ENCODE measurements at regions of chr16 and their contacts with region 1.

Region 1: DNA sequence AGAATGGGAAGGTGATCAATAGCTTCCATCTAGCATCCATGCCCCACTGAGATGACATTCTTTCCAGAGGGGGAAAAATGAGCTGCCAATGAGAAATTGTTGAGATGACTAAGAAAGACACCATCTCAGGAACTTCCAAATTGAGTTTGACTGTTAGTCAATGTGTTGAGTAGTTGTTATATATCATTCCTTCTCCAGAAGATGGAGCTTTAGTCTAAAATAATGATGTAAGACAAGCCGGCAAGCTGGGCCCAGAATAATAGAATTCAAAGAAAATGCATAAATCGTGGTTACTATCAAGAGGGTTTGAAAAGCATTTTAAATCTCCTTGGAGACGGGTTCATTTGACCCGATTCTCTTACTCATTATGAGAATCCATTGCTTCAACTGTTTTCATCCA is 71.0 kb upstream of the ATF7IP2 start:
- DNase-seq: no peak
- ATAC-seq: no peak
- H3K4me3 ChIP-seq: no peak overlapping the region
- H3K27ac ChIP-seq: no peak overlapping the region
- H3K4me1 ChIP-seq: no peaks in the 10 kb centered on the region
- H3K27me3 ChIP-seq: no peaks in the 10 kb centered on the region

Region 2: DNA sequence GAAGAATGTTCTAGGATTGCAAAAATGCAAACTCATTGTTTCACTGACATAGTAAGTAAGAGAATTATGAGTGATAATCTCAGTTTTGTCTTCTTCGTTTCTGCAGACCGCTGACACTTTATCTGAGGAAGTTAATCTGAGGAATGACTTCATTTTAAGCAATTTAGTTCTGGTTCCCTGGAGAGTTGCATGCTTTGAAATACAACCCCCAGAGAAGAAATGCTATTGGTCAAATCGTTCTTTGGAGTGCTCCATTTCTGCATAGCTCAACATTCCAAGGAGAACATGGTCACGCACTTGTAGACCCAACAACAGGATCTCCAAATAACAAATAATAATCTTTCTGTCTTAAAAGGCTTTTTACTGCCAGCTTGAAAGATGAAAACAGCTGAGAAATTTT is 559.7 kb before region 1 on chr16:
- intact Hi-C with region 1: no loop called
- DNase-seq: no peak
- ATAC-seq: peak; percentile 40 to 45
- H3K4me3 ChIP-seq: no peak overlapping the region
- H3K27ac ChIP-seq: no peak overlapping the region
- H3K4me1 ChIP-seq: no peaks in the 10 kb centered on the region
- H3K27me3 ChIP-seq: no peaks in the 10 kb centered on the region

Region 3: DNA sequence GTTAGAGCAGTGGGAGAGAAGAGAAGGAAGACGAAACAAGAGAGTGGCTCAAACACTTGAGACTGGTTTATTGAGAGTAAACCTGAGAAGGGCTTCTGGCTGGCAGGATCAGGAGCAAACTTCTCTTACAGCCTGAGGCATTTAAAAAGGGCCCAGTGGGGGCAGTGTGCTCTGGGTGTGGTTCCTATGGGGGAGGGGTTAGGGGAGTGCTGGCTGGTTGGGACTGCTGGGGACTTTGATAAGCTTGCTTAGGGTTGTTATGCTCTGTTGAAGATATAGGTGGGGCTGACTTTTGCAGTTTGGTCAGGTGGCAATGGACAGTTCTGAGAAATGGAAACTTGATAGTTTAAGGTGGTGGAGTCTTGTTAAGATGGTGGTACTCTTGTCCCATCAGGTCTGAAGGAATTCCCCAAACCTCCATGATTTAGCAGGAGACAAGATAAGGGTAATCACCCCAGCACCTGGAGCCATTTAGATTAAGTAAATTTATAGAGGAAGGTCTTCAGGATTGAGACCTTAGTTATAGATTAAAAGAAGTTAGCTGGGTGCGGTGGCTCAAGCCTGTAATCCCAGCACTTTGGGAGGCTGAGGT is 186.3 kb after region 1 on chr16:
- intact Hi-C with region 1: loop called (anchors 5 kb)
- DNase-seq: no peak
- ATAC-seq: no peak
- H3K4me3 ChIP-seq: no peak overlapping the region
- H3K27ac ChIP-seq: no peak overlapping the region
- H3K4me1 ChIP-seq: no peaks in the 10 kb centered on the region
- H3K27me3 ChIP-seq: no peaks in the 10 kb centered on the region

Region 4: GRCh38 chr16:10509534-10510025 is 194.8 kb after region 1 on chr16:
- intact Hi-C with region 1: loop called (anchors 5 kb)
- DNase-seq: peak in 2 of 3 donors; percentile 28 to 58
- ATAC-seq: peak; percentile 89 to 90
- H3K4me3 ChIP-seq: no peak overlapping the region
- H3K27ac ChIP-seq: no peak overlapping the region
- H3K4me1 ChIP-seq: no peaks in the 10 kb centered on the region
- H3K27me3 ChIP-seq: no peaks in the 10 kb centered on the region